Transverse colon (tissue), 4 donors: ENCODE measurements at regions of chr5 and their contacts with region 1.

Region 1: DNA sequence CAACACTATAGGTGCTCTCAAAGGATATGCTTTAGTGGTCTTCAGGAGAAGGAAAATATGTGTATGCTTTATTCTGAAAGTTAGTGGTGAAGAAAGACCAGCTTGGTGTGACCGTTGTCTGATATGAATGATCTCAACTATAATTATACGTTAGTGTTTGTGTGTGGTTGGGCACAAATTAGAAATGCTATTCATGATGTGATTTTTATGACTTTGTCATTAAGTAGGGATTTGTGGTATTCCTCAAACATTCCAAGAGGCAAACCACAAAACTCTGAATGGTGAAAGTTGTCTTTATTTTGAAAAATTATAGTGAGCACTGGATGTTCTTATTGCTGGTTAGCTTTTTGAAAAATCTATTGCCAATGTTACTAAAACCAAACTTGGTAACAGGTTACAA is 6.2 kb upstream of the F2R start:
- DNase-seq: no peak
- H3K4me3 ChIP-seq: no peak overlapping the region
- H3K27ac ChIP-seq: no peak overlapping the region
- H3K4me1 ChIP-seq: peaks cover 0 to under 1% (median 0%) of the 10 kb centered on the region in 4 donors
- H3K27me3 ChIP-seq: peaks cover 4% of the 10 kb centered on the region
- CTCF ChIP-seq: no peak
- EP300 ChIP-seq: no peak
- POLR2A ChIP-seq: no peak

Region 2: DNA sequence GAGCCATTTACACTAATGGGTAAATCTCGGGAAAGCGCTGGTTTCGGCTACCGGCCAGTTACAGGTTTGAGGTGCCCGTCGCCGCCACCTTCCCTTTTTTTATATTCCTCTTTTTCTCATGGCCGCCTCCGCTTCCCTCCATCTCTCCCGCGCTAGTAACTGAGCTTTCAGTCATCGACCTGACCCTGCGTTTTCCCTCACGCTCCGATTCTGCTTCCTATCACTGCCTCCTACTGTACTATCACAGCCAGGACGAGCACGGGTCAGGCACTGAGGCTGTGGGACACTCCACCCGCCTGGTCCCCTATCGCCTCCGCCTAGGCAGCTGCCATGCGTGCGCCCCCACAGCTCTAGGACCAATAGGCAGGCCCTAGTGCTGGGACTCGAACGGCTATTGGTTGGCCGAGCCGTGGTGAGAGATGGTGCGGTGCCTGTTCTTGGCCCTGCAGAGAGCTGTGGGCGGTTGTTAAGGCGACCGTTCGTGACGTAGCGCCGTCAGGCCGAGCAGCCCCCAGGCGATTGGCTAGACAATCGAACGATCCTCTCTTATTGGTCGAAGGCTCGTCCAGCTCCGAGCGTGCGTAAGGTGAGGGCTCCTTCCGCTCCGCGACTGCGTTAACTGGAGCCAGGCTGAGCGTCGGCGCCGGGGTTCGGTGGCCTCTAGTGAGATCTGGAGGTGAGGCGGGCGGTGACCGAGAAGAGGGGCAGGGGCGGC is 1373.0 kb before region 1 on chr5 and contains the start of gene HMGCR:
- in situ Hi-C with region 1: no loop called
- intact Hi-C with region 1: no loop called
- DNase-seq: peak; percentile 99
- H3K4me3 ChIP-seq: peak within 1 kb of the TSS; percentile 70 to 92 (median 78)
- H3K27ac ChIP-seq: peak within 1 kb of the TSS; percentile 88 to 96 (median 93)
- H3K4me1 ChIP-seq: peaks cover 0 to 41% (median 12%) of the 10 kb centered on the region in 4 donors
- H3K27me3 ChIP-seq: no peaks in the 10 kb centered on the region
- CTCF ChIP-seq: peak in 3 of 5 experiments; percentile 5 to 57 (median 20)
- EP300 ChIP-seq: no peak
- POLR2A ChIP-seq: peak; percentile 95
- total RNA-seq, gene HMGCR: 44.9 to 205 (median 99.5) TPM

Region 3: DNA sequence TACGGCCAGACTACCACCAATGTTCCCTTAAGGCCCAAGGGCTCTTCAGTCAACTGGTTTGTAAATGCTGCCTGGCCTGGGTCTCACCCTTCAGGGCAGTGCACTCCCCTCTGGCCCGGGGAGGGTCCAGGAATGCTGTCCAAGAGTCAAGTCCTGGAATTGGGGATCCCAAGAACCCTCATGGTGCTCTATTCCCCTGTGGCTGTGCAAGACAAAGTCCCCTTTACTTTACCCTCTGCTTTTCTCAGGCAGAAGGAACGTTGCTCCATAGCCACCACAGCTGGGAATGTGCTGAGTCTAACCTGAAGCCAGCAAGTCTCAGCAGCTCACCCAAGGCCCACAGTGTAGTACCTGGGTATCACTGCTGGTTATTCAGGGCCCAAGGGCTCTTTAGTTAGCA is 191.8 kb after region 1 on chr5:
- in situ Hi-C with region 1: no loop called
- intact Hi-C with region 1: no loop called
- DNase-seq: no peak
- H3K4me3 ChIP-seq: no peak overlapping the region
- H3K27ac ChIP-seq: no peak overlapping the region
- H3K4me1 ChIP-seq: no peaks in the 10 kb centered on the region
- H3K27me3 ChIP-seq: no peaks in the 10 kb centered on the region
- CTCF ChIP-seq: no peak
- EP300 ChIP-seq: no peak
- POLR2A ChIP-seq: no peak

Region 4: DNA sequence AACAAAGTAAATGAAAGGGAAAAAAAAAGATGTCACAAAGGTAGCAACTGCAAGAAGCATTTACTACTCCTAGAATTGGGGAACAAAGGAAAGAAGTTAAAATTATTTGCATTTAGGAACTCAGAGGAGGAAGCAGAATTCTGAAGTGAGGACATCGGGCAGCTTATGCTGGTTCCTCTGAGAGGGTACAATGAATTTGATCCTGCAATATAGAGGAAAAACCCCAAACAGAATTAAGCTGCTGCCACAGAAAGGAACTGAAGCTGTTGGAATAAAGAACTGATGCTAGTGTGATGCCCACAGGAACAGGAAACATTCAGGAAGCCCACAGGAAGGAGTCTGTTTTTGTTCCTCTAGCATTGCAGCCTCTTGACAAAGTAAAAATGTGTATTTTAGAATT is 1088.7 kb after region 1 on chr5:
- in situ Hi-C with region 1: no loop called
- intact Hi-C with region 1: no loop called
- DNase-seq: no peak
- H3K4me3 ChIP-seq: no peak overlapping the region
- H3K27ac ChIP-seq: no peak overlapping the region
- H3K4me1 ChIP-seq: no peaks in the 10 kb centered on the region
- H3K27me3 ChIP-seq: peaks cover 12% of the 10 kb centered on the region
- CTCF ChIP-seq: no peak
- EP300 ChIP-seq: no peak
- POLR2A ChIP-seq: no peak

Region 5: DNA sequence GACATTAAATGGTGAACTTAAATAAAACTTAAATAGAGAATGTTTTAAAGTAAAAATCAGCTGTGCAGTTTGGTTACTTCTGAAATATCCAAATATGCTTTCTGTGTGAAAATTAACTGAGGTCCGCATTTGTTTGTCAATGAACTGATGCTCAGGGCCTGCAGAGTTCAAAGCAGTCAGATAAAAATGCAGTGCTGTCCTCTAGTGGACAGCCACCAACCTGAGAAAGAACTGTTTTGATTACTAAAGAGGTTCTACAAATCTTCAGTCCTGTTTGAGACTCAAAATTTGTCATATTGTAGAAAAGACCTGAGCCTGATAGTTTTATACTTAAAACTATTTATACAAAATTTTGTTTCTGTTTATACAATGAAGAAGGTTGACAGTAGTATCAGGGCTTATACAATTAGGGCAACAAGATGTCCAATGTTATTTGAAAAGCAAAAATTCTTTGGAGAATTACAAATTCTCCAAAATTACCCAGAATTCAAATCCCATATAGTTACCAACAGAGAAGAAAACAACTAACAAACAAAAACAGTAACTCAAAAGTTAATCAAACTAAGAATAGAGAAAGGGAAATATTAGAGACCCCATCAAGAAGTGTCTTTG is 1298.7 kb after region 1 on chr5:
- in situ Hi-C with region 1: no loop called
- intact Hi-C with region 1: loop called (anchors 5 kb)
- DNase-seq: no peak
- H3K4me3 ChIP-seq: no peak overlapping the region
- H3K27ac ChIP-seq: no peak overlapping the region
- H3K4me1 ChIP-seq: no peaks in the 10 kb centered on the region
- H3K27me3 ChIP-seq: no peaks in the 10 kb centered on the region
- CTCF ChIP-seq: peak; percentile 66 to 70 (median 69)
- EP300 ChIP-seq: no peak
- POLR2A ChIP-seq: no peak